Endothelial cell of umbilical vein (primary cell): ENCODE measurements at regions of chr9 and their contacts with region 1.

Region 1: DNA sequence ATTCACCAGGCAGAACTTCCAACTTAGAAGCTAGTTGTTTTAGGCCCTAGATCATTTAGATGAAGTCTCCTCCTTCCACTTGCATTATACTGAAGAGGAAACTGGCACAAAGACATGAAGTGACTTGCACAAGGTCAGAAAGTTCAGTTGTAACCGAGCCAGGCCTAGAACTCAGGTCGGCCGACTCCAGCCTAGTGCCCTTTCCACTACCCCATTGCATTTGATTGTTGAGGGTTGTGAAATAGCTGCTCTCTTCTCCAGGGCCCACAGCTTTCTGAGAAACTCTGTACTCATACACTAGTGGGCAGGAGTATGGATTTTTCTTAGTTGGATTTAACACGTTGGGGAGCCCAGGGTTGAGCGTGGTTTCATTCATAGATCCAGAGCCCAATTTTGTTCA is 5.6 kb downstream of the ZNF462 start:
- DNase-seq: no peak
- H3K4me3 ChIP-seq: no peak overlapping the region
- H3K27ac ChIP-seq: no peak overlapping the region
- H3K4me1 ChIP-seq: peaks cover 3% of the 10 kb centered on the region
- H3K27me3 ChIP-seq: no peaks in the 10 kb centered on the region
- CTCF ChIP-seq: no peak
- POLR2A ChIP-seq: no peak

Region 2: GRCh38 chr9:106878924-106879323 is 10.4 kb after region 1 on chr9:
- CTCF ChIA-PET with region 1: interaction called, 4 read pairs
- POLR2A ChIA-PET with region 1: no interaction called
- dilution Hi-C with region 1: no loop called
- intact Hi-C with region 1: loop called (anchors 1 kb)
- DNase-seq: peak; percentile 85
- H3K4me3 ChIP-seq: no peak overlapping the region
- H3K27ac ChIP-seq: peak overlapping the region; percentile 16
- H3K4me1 ChIP-seq: peaks cover 17% of the 10 kb centered on the region
- H3K27me3 ChIP-seq: no peaks in the 10 kb centered on the region
- CTCF ChIP-seq: no peak
- POLR2A ChIP-seq: no peak